ENCODE measurements at regions of chr3 and their contacts with region 1.

Region 1: DNA sequence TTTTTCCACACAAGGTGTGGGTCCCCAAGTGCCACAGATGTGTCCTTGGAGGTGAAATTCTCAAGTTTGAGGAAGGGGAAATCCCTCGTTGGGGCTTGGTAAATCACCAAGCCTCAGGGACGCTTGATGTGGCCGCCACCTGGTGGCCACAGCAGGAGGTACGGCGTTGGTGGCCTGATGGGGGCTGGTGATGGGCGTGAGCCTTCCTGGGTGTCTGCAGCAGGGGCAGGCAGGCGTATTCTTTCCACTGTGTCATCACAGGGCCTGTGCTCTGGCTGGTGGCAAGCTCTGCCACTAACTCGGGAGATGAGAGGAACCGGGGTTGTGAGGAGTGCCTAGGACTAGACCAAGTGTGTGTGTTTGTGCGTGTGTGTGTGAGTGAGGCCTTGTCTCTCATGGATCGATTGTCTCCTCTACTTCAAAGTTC is 4.2 kb downstream of the ACOX2 start:
- DNase-seq: peak; percentile 56 to 87 (median 78)
- ATAC-seq: peak in 3 of 4 donors; percentile 53 to 65 (median 61)
- H3K4me3 ChIP-seq: no peak overlapping the region
- H3K27ac ChIP-seq: no peak overlapping the region
- H3K4me1 ChIP-seq: peaks cover 8 to 50% (median 27%) of the 10 kb centered on the region in 12 donors
- H3K27me3 ChIP-seq: no peaks in the 10 kb centered on the region
- CTCF ChIP-seq: peak; percentile 85 to 95 (median 90)
- POLR2A ChIP-seq: no peak

Region 2: GRCh38 chr3:58188173-58188564 is 344.6 kb before region 1 on chr3:
- intact Hi-C with region 1: loop called in 1 of 10 experiments (anchors 10 kb)
- DNase-seq: no peak
- ATAC-seq: no peak
- H3K4me3 ChIP-seq: no peak overlapping the region
- H3K27ac ChIP-seq: peak overlapping the region in 1 of 12 donors; percentile 44
- H3K4me1 ChIP-seq: peaks cover 0 to 20% (median 13%) of the 10 kb centered on the region in 12 donors
- H3K27me3 ChIP-seq: no peaks in the 10 kb centered on the region
- CTCF ChIP-seq: no peak
- POLR2A ChIP-seq: no peak

Region 3: DNA sequence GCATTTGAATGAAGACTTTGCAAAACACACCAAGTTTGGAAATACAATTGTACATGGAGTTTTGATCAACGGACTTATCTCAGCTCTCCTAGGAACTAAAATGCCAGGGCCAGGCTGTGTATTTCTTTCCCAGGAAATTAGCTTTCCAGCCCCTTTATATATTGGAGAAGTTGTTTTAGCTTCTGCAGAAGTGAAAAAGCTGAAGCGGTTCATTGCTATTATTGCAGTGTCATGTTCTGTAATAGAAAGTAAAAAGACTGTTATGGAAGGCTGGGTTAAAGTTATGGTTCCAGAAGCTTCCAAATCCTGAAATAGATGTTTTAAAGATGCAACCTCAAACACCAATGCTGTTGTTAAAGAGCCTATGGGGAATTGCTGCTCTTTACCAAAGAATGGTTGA is 215.0 kb before region 1 on chr3:
- intact Hi-C with region 1: loop called in 9 of 10 experiments (anchors 5 kb)
- DNase-seq: no peak
- ATAC-seq: no peak
- H3K4me3 ChIP-seq: no peak overlapping the region
- H3K27ac ChIP-seq: peak overlapping the region in 1 of 12 donors; percentile 76
- H3K4me1 ChIP-seq: peaks cover 0 to 15% (median 3%) of the 10 kb centered on the region in 12 donors
- H3K27me3 ChIP-seq: no peaks in the 10 kb centered on the region
- CTCF ChIP-seq: no peak
- POLR2A ChIP-seq: no peak

Region 4: DNA sequence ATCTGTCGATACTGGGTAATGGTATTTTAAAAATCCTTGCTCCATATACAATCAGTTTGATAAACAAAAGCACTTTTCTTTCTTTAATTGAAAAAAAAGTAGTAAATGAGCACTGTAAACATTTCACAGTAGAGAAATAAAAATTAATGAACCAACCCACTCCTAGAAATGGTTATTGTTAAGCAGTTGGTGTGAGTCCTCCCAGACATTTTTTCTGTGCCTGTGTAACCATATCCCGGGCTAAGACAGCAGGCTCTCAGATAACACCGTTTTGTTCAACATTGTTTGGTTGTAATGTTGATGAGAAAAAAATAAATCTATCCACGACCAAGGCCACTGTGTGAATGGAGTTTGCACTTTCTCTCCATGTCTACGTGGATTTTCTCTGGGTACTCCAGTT is 157.6 kb before region 1 on chr3:
- intact Hi-C with region 1: no loop called
- DNase-seq: no peak
- ATAC-seq: no peak
- H3K4me3 ChIP-seq: no peak overlapping the region
- H3K27ac ChIP-seq: no peak overlapping the region
- H3K4me1 ChIP-seq: peaks cover 0 to 3% (median 0%) of the 10 kb centered on the region in 12 donors
- H3K27me3 ChIP-seq: no peaks in the 10 kb centered on the region
- CTCF ChIP-seq: no peak
- POLR2A ChIP-seq: no peak

Region 5: DNA sequence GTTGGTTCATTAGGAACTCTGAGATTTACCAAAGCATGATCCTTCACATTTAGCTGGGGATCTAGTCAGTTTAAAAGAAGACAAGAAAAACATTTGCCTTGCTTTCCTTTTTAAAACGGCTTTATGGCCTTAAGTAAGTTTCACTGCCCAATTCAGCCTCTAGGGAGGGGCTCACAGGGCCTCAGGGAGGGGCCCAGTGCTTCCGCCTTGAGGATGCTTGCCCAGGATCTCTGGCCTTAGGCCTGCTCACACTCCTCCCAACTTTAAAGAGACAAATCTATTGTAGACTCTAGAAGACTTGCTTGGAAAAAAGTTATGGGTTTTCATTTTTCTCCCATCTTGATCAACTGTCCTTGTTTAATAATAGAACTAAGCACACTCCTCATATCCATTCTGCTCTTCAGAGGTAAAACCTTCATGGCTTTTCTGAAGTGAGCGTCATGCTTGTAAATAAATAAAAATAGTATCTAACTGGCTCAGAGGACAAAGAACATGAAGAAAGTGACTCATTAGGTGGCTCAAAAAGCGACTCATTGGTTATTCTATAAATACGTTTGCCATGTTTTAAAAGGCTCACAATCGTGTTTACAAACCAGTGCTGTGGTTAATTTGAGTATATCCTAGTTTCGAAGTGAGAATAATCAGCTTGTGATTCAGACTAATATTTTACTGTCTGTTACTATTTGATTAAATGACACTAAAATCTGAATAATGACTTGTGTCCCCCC is 112.9 kb before region 1 on chr3:
- intact Hi-C with region 1: loop called in 1 of 10 experiments (anchors 5 kb)
- DNase-seq: peak in 4 of 5 donors; percentile 58 to 69 (median 65)
- ATAC-seq: peak; percentile 54 to 89 (median 84)
- H3K4me3 ChIP-seq: no peak overlapping the region
- H3K27ac ChIP-seq: peak overlapping the region; percentile 57 to 83 (median 72)
- H3K4me1 ChIP-seq: peaks cover 0 to 37% (median 12%) of the 10 kb centered on the region in 12 donors
- H3K27me3 ChIP-seq: no peaks in the 10 kb centered on the region
- CTCF ChIP-seq: peak in 4 of 12 donors; percentile 6 to 28 (median 22)
- POLR2A ChIP-seq: no peak

Region 6: DNA sequence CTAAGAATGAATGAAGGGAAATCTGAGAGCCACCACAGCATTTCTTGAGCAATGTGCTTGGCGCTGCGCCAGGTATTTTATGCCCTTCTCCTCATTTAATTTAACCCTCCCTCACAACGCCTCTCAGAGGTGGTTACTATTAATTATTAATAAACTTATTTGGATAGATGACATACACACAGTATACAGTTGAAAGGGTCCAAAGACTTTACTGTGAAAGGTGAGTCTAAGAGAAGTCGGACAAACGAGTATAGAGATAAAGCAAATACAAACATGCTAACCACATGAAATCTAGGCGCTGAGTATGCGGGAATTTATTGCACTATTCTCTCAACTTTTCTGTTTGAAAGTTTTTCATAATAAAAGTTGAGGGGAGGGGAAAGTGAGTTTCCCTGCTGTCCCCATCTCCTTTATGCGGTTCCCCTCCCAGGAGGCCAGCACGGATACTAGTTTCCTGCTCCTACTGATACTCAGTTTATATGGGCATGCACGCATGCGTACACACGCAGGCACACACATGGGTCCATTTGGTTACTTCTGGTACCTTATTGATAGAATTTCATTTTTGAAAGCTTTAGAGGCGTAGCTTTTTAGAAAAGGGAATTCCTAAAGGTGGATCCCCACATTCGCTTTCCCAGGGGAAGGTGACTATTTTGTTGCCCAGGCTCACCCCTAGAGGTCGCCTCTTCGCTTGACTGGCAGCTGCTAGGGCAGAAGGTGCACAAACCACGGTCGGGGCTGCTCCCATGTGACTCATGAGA is 69.4 kb before region 1 on chr3:
- intact Hi-C with region 1: loop called in 8 of 10 experiments (anchors 1 to 10 kb)
- DNase-seq: peak; percentile 49 to 83 (median 74)
- ATAC-seq: peak; percentile 82 to 96 (median 93)
- H3K4me3 ChIP-seq: peak overlapping the region in 8 of 12 donors; percentile 13 to 44 (median 32)
- H3K27ac ChIP-seq: no peak overlapping the region
- H3K4me1 ChIP-seq: peaks cover 0 to 16% (median 2%) of the 10 kb centered on the region in 12 donors
- H3K27me3 ChIP-seq: no peaks in the 10 kb centered on the region
- CTCF ChIP-seq: peak; percentile 59 to 92 (median 80)
- POLR2A ChIP-seq: no peak

Measured in heart left ventricle (tissue), 16 donors.